ENCODE measurements at regions of chr6 and their contacts with region 1.

Region 1: GRCh38 chr6:139708337-139709199 is 334.1 kb upstream of the CITED2 start:
- DNase-seq: no peak
- H3K4me3 ChIP-seq: no peak overlapping the region
- H3K27ac ChIP-seq: peak overlapping the region in 3 of 4 donors; percentile 33 to 54 (median 48)
- H3K4me1 ChIP-seq: peaks cover 0 to 39% (median 33%) of the 10 kb centered on the region in 4 donors
- H3K27me3 ChIP-seq: no peaks in the 10 kb centered on the region
- CTCF ChIP-seq: no peak
- EP300 ChIP-seq: no peak
- POLR2A ChIP-seq: no peak

Region 2: GRCh38 chr6:139474145-139475108 is 234.1 kb before region 1 on chr6:
- intact Hi-C with region 1: loop called (anchors 10 kb)
- DNase-seq: peak; percentile 70
- H3K4me3 ChIP-seq: peak overlapping the region; percentile 0 to 26 (median 19)
- H3K27ac ChIP-seq: peak overlapping the region; percentile 61 to 85 (median 76)
- H3K4me1 ChIP-seq: peaks cover 0 to 38% (median 31%) of the 10 kb centered on the region in 4 donors
- H3K27me3 ChIP-seq: no peaks in the 10 kb centered on the region
- CTCF ChIP-seq: no peak
- EP300 ChIP-seq: peak in 3 of 4 donors; percentile 3 to 60 (median 43)
- POLR2A ChIP-seq: no peak

Region 3: GRCh38 chr6:139587469-139587868 is 121.1 kb before region 1 on chr6:
- intact Hi-C with region 1: no loop called
- DNase-seq: no peak
- H3K4me3 ChIP-seq: no peak overlapping the region
- H3K27ac ChIP-seq: peak overlapping the region in 3 of 4 donors; percentile 69 to 82 (median 81)
- H3K4me1 ChIP-seq: peaks cover 0 to 52% (median 49%) of the 10 kb centered on the region in 4 donors
- H3K27me3 ChIP-seq: no peaks in the 10 kb centered on the region
- CTCF ChIP-seq: no peak
- EP300 ChIP-seq: no peak
- POLR2A ChIP-seq: no peak

Region 4: DNA sequence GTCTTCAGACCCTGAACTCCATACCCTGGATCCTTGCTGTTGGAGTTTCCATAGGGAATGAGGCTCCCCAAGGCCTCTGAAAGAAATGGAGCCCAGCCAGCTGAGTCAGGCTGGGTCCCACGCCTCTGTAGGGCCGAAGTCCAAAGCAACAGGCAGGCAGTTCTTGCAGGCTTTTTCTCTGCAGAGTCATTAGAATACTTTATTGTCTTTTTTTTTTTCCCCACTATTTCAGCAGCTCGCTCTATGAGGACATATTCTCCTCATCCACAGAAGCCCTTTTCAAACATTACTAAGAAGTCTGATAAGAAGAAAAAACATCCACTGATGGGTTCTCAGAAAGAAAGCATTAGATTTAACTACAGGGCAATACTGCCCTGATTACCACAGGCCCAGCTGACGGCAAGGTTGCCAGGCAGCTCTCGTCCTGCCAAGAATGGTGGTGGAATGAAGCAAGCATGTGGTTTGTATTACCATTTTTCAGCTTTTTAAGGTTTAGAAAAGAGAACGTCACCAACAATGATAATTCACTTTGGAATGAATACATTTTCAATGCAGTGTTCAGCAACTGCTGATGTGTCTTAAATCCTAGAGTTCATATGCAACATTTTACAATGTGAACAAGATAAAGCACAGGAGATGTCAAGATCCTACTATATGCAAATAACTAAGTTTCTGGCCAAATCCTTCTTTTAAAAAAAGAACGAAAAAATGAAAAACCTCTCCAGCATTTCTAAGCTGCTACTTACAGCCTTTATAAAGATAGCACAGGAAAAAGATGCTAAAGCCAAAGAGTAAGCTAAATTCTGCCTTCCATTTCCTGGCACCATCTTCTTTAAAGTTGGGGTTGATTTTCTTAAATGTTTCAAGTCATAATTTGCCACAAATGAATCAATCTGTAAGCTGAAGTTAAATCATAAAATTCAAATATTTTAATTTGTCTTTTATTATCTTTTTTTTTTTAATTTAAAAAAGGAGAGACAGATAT is 110.5 kb before region 1 on chr6:
- intact Hi-C with region 1: loop called (anchors 5 kb)
- DNase-seq: peak; percentile 86
- H3K4me3 ChIP-seq: no peak overlapping the region
- H3K27ac ChIP-seq: peak overlapping the region; percentile 69 to 82 (median 77)
- H3K4me1 ChIP-seq: peaks cover 0 to 54% (median 46%) of the 10 kb centered on the region in 4 donors
- H3K27me3 ChIP-seq: no peaks in the 10 kb centered on the region
- CTCF ChIP-seq: no peak
- EP300 ChIP-seq: peak in 1 of 4 donors; percentile 11
- POLR2A ChIP-seq: no peak

Region 5: GRCh38 chr6:139812939-139813338 is 104.4 kb after region 1 on chr6:
- intact Hi-C with region 1: no loop called
- DNase-seq: no peak
- H3K4me3 ChIP-seq: no peak overlapping the region
- H3K27ac ChIP-seq: no peak overlapping the region
- H3K4me1 ChIP-seq: no peaks in the 10 kb centered on the region
- H3K27me3 ChIP-seq: no peaks in the 10 kb centered on the region
- CTCF ChIP-seq: no peak
- EP300 ChIP-seq: no peak
- POLR2A ChIP-seq: no peak

Measured in sigmoid colon (tissue), 7 donors.